CD4-positive, alpha-beta memory T cell (primary cell): ENCODE measurements at regions of chr15 and their contacts with region 1.

Region 1: DNA sequence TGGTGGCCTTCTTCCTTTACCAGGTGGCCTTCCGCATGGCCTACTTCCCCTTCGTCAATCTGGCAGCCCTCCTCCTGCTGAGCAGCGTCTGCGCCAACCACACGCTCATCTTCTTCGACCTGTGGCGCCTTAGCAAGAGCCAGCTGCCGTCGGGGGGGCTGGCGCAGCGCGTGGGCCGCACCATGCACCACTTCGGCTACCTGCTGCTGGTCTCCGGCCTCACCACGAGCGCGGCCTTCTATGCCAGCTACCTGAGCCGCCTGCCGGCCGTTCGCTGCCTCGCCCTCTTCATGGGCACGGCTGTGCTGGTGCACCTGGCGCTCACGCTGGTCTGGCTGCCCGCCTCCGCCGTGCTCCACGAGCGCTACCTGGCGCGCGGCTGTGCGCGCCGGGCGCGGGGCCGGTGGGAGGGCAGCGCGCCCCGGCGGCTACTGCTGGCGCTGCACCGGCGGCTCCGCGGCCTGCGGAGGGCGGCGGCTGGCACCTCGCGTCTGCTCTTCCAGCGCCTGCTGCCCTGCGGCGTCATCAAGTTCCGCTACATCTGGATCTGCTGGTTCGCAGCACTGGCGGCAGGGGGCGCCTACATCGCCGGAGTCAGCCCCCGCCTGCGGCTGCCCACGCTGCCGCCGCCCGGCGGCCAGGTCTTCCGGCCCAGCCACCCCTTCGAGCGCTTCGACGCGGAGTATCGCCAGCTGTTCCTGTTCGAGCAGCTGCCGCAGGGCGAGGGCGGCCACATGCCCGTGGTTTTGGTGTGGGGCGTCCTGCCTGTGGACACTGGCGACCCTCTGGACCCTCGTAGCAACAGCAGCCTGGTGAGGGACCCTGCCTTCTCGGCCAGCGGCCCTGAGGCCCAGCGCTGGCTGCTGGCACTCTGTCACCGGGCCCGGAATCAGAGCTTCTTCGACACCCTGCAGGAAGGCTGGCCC is 9.9 kb downstream of the DISP2 start:
- DNase-seq: peak; percentile 88 to 91 (median 89)
- H3K4me3 ChIP-seq: peak overlapping the region in 1 of 2 donors; percentile 45
- H3K4me3 Mint-ChIP-seq: peak overlapping the region; percentile 80 to 88 (median 85)
- H3K27ac ChIP-seq: peak overlapping the region; percentile 34
- H3K27ac Mint-ChIP-seq: peak overlapping the region; percentile 79 to 90 (median 86)
- H3K4me1 ChIP-seq: peaks cover 24% of the 10 kb centered on the region
- H3K4me1 Mint-ChIP-seq: peaks cover 11 to 27% (median 18%) of the 10 kb centered on the region in 4 donors
- H3K27me3 ChIP-seq: no peaks in the 10 kb centered on the region
- H3K27me3 Mint-ChIP-seq: no peaks in the 10 kb centered on the region

Region 2: GRCh38 chr15:40252438-40253166 is 115.3 kb before region 1 on chr15:
- CTCF ChIA-PET with region 1: no interaction called
- POLR2A ChIA-PET with region 1: no interaction called
- intact Hi-C with region 1: no loop called
- DNase-seq: peak in 3 of 5 donors; percentile 7 to 15 (median 12)
- H3K4me3 ChIP-seq: peak overlapping the region; percentile 23 to 51
- H3K4me3 Mint-ChIP-seq: peak overlapping the region; percentile 50 to 84 (median 76)
- H3K27ac ChIP-seq: no peak overlapping the region
- H3K27ac Mint-ChIP-seq: peak overlapping the region in 2 of 7 donors; percentile 21 to 70
- H3K4me1 ChIP-seq: peaks cover 5% of the 10 kb centered on the region
- H3K4me1 Mint-ChIP-seq: peaks cover 2 to 18% (median 12%) of the 10 kb centered on the region in 4 donors
- H3K27me3 ChIP-seq: peaks cover 7% of the 10 kb centered on the region
- H3K27me3 Mint-ChIP-seq: peaks cover 16% of the 10 kb centered on the region in 2 donors

Region 3: DNA sequence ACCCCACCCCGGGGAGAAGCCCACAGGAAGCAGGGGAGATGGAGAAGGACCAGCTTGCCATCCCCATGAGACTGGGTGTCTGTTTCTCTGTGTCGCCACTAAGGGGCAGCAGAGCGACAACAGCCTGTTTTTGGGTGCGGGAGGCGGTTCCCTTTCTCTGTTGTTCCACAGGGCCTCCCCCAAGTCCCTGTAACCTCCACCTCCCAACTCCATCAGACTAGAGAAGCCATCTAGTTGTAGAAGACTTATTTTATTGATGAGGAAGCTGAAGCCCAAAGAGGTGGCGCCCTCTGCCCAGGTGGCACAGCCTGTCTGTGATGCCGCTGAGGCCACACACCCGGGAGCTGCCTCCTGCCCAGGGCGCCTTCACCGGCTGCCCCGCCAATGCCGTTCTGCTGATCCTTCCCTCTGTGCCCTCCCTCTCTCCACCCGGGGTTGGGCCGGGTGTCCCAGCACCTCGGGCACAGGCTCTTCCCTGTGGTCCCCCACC is 23.3 kb before region 1 on chr15:
- CTCF ChIA-PET with region 1: interaction called, 10 read pairs
- POLR2A ChIA-PET with region 1: interaction called, 4 read pairs
- intact Hi-C with region 1: loop called (anchors 1 kb)
- DNase-seq: peak; percentile 68 to 71 (median 68)
- H3K4me3 ChIP-seq: no peak overlapping the region
- H3K4me3 Mint-ChIP-seq: no peak overlapping the region
- H3K27ac ChIP-seq: no peak overlapping the region
- H3K27ac Mint-ChIP-seq: no peak overlapping the region
- H3K4me1 ChIP-seq: peaks cover 7% of the 10 kb centered on the region
- H3K4me1 Mint-ChIP-seq: peaks cover 0 to 3% (median under 1%) of the 10 kb centered on the region in 4 donors
- H3K27me3 ChIP-seq: no peaks in the 10 kb centered on the region
- H3K27me3 Mint-ChIP-seq: no peaks in the 10 kb centered on the region

Region 4: GRCh38 chr15:40382580-40383456 is 14.9 kb after region 1 on chr15 and contains the start of gene KNSTRN:
- CTCF ChIA-PET with region 1: interaction called, 48 read pairs
- POLR2A ChIA-PET with region 1: interaction called, 8 read pairs
- intact Hi-C with region 1: no loop called
- DNase-seq: peak; percentile 90 to 95 (median 91)
- H3K4me3 ChIP-seq: peak within 1 kb of the TSS; percentile 67 to 88
- H3K4me3 Mint-ChIP-seq: peak within 1 kb of the TSS; percentile 92 to 99 (median 96)
- H3K27ac ChIP-seq: peak within 1 kb of the TSS; percentile 69
- H3K27ac Mint-ChIP-seq: peak within 1 kb of the TSS; percentile 71 to 93 (median 88)
- H3K4me1 ChIP-seq: peaks cover 11% of the 10 kb centered on the region
- H3K4me1 Mint-ChIP-seq: peaks cover 10 to 20% (median 16%) of the 10 kb centered on the region in 4 donors
- H3K27me3 ChIP-seq: no peaks in the 10 kb centered on the region
- H3K27me3 Mint-ChIP-seq: peaks cover 0 to 2% of the 10 kb centered on the region in 2 donors
- total RNA-seq, gene KNSTRN: 6.8 to 8.8 TPM

Region 5: DNA sequence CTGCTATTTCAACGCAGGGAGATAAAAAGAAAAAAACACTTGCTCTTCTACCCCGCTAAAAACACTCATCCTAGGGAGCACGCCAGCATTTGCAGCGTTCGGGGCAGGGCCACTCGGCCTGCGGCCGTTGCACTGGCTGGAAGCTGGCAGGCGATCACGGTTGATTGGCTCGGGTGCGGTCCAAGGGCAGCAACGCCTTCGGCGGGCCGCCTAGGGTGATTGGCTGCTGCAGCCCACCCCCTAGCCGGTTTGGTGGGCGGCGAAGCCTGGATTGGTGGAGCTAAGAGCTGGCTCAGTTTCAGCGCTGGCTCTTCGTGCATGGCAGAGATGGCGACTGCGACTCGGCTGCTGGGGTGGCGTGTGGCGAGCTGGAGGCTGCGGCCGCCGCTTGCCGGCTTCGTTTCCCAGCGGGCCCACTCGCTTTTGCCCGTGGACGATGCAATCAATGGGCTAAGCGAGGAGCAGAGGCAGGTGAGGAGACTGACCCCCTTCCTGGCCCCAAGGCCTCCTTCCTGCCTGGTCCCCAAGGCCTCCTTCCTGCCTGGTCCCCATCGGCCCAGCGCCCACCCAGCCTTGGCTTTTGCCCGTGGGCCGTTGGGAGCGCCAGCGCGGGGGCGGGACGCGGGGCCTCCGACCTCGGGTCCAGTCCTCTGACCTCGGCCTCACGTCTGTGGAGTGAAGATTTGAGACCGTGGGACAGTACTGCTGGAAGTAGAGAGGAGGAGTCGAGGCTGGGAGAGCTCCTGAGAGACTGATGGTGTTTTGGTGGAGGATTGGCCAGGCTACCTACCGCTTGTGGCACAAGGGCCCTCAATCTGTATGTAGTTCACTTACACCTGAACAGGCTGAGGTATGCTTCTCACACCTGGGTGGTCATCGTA is 37.8 kb after region 1 on chr15 and contains the start of gene IVD:
- CTCF ChIA-PET with region 1: interaction called, 8 read pairs
- POLR2A ChIA-PET with region 1: interaction called, 12 read pairs
- intact Hi-C with region 1: loop called (anchors 5 kb)
- DNase-seq: peak; percentile 78 to 82 (median 80)
- H3K4me3 ChIP-seq: peak within 1 kb of the TSS; percentile 42 to 63
- H3K4me3 Mint-ChIP-seq: peak within 1 kb of the TSS; percentile 82 to 98 (median 90)
- H3K27ac ChIP-seq: peak within 1 kb of the TSS; percentile 61
- H3K27ac Mint-ChIP-seq: peak within 1 kb of the TSS; percentile 62 to 92 (median 86)
- H3K4me1 ChIP-seq: peaks cover 25% of the 10 kb centered on the region
- H3K4me1 Mint-ChIP-seq: peaks cover 24 to 35% (median 30%) of the 10 kb centered on the region in 4 donors
- H3K27me3 ChIP-seq: no peaks in the 10 kb centered on the region
- H3K27me3 Mint-ChIP-seq: no peaks in the 10 kb centered on the region
- total RNA-seq, gene IVD: 56.4 to 62.2 TPM

Region 6: GRCh38 chr15:40564591-40565332 is 196.8 kb after region 1 on chr15 and contains the start of gene CCDC32:
- CTCF ChIA-PET with region 1: no interaction called
- POLR2A ChIA-PET with region 1: no interaction called
- intact Hi-C with region 1: loop called (anchors 5 kb)
- DNase-seq: peak; percentile 93 to 98 (median 96)
- H3K4me3 ChIP-seq: peak within 1 kb of the TSS; percentile 97 to 98
- H3K4me3 Mint-ChIP-seq: peak within 1 kb of the TSS; percentile 95 to 98 (median 97)
- H3K27ac ChIP-seq: peak within 1 kb of the TSS; percentile 92
- H3K27ac Mint-ChIP-seq: peak within 1 kb of the TSS; percentile 89 to 99 (median 98)
- H3K4me1 ChIP-seq: peaks cover 34% of the 10 kb centered on the region
- H3K4me1 Mint-ChIP-seq: peaks cover 26 to 65% (median 42%) of the 10 kb centered on the region in 4 donors
- H3K27me3 ChIP-seq: no peaks in the 10 kb centered on the region
- H3K27me3 Mint-ChIP-seq: no peaks in the 10 kb centered on the region
- total RNA-seq, gene CCDC32: 31.7 to 32.4 TPM